Naive thymus-derived CD4-positive, alpha-beta T cell (primary cell): ENCODE measurements at regions of chr11 and their contacts with region 1.

Region 1: DNA sequence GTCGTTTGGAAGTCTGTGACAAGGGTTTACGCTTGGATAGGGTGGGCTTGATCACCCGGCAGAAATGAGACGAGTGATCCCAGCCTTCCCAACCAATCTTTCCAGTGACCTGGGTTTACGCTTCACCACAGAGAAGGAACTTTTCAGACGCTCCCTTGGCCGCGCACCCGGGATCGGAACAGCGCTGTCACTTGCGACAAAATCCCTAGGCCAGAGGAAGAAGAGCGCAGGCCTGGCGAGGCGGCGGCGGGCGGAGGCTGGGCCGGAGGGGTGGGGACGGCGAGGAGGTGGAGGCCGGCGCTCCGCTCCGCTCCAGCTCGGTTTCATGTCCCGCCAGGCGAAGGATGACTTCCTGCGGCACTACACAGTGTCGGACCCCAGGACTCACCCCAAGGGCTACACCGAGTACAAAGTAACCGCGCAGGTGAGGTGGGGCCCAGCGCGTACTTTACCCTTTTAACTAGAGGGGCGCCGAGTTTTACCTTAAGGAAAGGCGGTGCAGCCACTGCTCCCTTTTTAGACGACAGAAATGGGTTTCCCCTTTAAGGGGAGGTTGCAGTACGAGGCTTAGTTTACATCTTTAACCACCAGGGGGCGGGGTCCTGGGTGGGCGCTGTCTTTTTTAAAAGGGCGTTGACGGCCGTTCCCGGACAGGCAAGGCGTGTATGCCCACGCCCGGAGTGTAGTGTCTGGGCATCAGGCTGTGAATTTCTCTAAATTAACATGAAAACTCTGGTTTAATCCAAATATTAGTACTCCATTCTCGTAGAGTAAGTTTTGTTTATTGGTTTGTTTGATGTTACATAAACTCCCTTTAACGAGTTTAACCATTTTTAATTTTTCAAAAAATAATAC is at the start of gene SNX15:
- DNase-seq: peak; percentile 61 to 95 (median 94)
- ATAC-seq: peak; percentile 97
- H3K4me3 ChIP-seq: peak within 1 kb of the TSS; percentile 41
- H3K4me3 Mint-ChIP-seq: peak within 1 kb of the TSS; percentile 66 to 91 (median 83)
- H3K27ac ChIP-seq: peak within 1 kb of the TSS; percentile 59
- H3K27ac Mint-ChIP-seq: peak within 1 kb of the TSS; percentile 59 to 95 (median 87)
- H3K4me1 ChIP-seq: peaks cover 9 to 14% of the 10 kb centered on the region in 2 donors
- H3K4me1 Mint-ChIP-seq: peaks cover 12 to 24% (median 21%) of the 10 kb centered on the region in 7 donors
- H3K27me3 ChIP-seq: no peaks in the 10 kb centered on the region
- H3K27me3 Mint-ChIP-seq: no peaks in the 10 kb centered on the region
- total RNA-seq, gene SNX15: 13.1 to 29.0 (median 21.7) TPM

Region 2: DNA sequence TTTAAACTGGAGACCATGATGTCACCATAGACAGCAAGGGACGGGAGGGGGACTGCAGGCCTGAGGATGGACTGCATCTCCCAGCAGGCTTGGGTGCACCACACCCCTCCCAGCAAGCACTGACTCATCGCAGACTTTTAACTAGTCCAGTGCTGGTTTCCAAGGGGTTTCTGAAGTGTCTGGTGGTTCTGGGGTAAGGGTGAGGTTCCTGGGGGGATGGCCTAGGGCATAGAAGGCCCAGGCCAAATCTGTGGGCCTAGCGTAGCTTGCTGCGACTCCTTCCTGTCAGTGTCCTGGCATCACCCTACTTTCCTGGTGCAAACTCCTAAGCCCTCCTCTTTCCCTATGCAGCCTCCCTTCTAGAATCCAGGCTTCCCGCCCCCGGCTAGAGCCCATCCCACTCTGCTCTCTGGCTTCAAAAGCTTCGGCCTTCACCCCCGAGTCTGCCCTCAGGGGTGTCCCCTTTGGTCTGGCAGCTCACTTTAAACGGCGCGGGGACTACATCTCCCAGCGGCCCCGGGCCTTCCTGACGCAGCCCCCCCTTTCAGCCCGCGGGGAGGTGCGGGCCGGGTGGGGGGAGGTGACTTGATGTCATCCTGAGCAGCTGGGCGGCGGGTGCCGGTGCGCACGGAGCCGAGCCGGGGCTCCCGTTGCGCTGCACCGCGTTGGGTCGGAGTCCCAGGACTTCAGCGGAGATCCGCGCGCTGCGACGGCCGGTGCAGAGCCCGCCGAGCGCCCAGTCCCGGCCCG is 103.2 kb before region 1 on chr11 and contains the start of gene PPP2R5B:
- CTCF ChIA-PET with region 1: no interaction called
- POLR2A ChIA-PET with region 1: no interaction called
- intact Hi-C with region 1: loop called (anchors 1 kb)
- DNase-seq: peak; percentile 79 to 92 (median 89)
- ATAC-seq: peak; percentile 95
- H3K4me3 ChIP-seq: peak within 1 kb of the TSS; percentile 67
- H3K4me3 Mint-ChIP-seq: peak within 1 kb of the TSS; percentile 89 to 99 (median 96)
- H3K27ac ChIP-seq: peak within 1 kb of the TSS; percentile 81
- H3K27ac Mint-ChIP-seq: peak within 1 kb of the TSS; percentile 95 to 100 (median 98)
- H3K4me1 ChIP-seq: peaks cover 11 to 15% of the 10 kb centered on the region in 2 donors
- H3K4me1 Mint-ChIP-seq: peaks cover 9 to 24% (median 14%) of the 10 kb centered on the region in 7 donors
- H3K27me3 ChIP-seq: no peaks in the 10 kb centered on the region
- H3K27me3 Mint-ChIP-seq: no peaks in the 10 kb centered on the region
- total RNA-seq, gene PPP2R5B: 11.9 to 19.1 (median 18.8) TPM

Region 3: GRCh38 chr11:65047581-65048422 is 20.4 kb after region 1 on chr11:
- CTCF ChIA-PET with region 1: no interaction called
- POLR2A ChIA-PET with region 1: no interaction called
- intact Hi-C with region 1: no loop called
- DNase-seq: peak in 4 of 9 donors; percentile 13 to 37 (median 24)
- ATAC-seq: peak; percentile 64
- H3K4me3 ChIP-seq: peak overlapping the region; percentile 14
- H3K4me3 Mint-ChIP-seq: peak overlapping the region; percentile 81 to 95 (median 88)
- H3K27ac ChIP-seq: peak overlapping the region; percentile 70
- H3K27ac Mint-ChIP-seq: peak overlapping the region; percentile 80 to 98 (median 86)
- H3K4me1 ChIP-seq: peaks cover 0 to 17% of the 10 kb centered on the region in 2 donors
- H3K4me1 Mint-ChIP-seq: peaks cover 12 to 31% (median 23%) of the 10 kb centered on the region in 7 donors
- H3K27me3 ChIP-seq: no peaks in the 10 kb centered on the region
- H3K27me3 Mint-ChIP-seq: no peaks in the 10 kb centered on the region

Region 4: DNA sequence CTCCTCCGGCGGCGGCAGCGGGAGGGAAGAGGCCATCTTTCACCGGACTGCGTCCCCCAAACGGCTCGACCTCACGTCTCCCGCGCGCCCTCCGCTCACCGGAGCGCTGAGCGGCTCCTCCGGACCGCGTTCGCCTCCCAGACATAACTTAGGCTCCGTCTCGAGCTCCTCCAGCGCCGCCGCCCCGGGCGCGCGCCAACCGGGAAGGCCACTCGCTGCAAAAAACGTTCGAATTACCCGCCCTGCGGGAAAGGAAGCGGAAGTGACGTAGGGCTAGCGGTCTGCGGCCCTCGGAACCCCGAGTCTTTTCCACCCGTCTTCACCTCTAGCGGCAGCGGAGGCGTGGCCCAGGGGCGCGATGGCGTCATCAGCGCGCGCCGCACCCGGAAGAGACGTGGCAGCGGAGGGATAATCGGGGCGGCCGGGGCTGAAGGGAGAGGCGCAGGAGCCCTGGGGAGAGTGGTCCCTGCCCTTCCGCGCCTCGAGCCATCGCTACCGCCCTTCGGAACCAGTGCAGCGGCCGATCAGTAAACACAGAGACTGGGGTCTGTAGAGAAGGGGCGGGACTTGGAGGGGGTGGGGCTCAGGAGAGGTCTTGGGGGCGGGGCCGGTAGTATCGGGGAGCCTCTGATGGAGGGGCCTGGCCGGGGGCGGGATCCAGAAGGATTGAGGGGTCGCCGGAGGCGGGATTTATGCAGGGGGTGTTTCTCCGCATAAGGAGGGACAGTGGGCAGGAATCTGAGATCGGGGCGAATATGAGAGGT is 56.6 kb after region 1 on chr11 and contains the starts of genes CDCA5 and ZFPL1:
- CTCF ChIA-PET with region 1: interaction called, 3 read pairs
- POLR2A ChIA-PET with region 1: interaction called, 3 read pairs
- intact Hi-C with region 1: loop called (anchors 1 kb)
- DNase-seq: peak; percentile 94 to 98 (median 97)
- ATAC-seq: peak; percentile 96
- H3K4me3 ChIP-seq: peak within 1 kb of the TSS; percentile 61
- H3K4me3 Mint-ChIP-seq: peak within 1 kb of the TSS; percentile 88 to 99 (median 93)
- H3K27ac ChIP-seq: peak within 1 kb of the TSS; percentile 86
- H3K27ac Mint-ChIP-seq: peak within 1 kb of the TSS; percentile 94 to 99 (median 97)
- H3K4me1 ChIP-seq: peaks cover 13 to 14% of the 10 kb centered on the region in 2 donors
- H3K4me1 Mint-ChIP-seq: peaks cover 20 to 49% (median 27%) of the 10 kb centered on the region in 7 donors
- H3K27me3 ChIP-seq: no peaks in the 10 kb centered on the region
- H3K27me3 Mint-ChIP-seq: peaks cover 0 to 4% (median 0%) of the 10 kb centered on the region in 5 donors
- total RNA-seq, gene CDCA5: 0.56 to 68.1 (median 0.81) TPM
- total RNA-seq, gene ZFPL1: 29.9 to 53.0 (median 49.3) TPM

Region 5: DNA sequence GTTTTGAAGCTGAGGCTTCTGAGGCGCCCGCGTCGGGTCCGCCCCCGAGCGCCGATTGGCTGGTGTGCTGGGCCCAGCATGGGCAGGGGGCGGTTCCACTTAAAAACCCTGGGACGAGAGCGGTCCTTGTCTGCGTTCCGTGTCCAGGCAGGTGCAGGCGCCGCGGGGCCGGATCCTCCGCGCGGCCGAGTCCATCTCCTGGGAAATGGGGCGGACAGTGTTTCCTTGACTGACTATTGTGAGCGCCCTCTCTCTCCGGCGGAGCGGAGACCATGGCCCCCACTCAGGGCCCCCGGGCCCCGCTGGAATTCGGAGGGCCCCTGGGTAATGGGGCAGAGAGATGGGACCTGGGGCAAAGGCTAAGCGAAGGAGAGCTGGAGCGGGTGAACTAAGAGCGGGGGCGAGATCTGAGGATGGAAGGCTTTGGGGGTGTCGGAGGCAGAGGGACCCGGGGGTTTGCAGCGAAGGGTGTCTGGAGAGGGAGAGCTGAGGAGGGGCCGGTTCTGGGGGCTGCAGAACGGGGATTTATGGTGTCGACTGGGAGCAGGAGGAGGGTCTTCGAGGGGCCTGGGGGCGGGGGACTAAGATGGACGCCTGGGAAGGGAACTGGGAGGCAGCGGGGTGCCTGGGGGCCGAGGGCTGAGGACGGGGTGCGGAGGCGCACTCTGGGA is 84.4 kb after region 1 on chr11 and contains the start of gene TM7SF2:
- CTCF ChIA-PET with region 1: interaction called, 3 read pairs
- POLR2A ChIA-PET with region 1: interaction called, 5 read pairs
- intact Hi-C with region 1: loop called (anchors 1 to 2 kb)
- DNase-seq: peak; percentile 84 to 94 (median 92)
- ATAC-seq: peak; percentile 82
- H3K4me3 ChIP-seq: peak within 1 kb of the TSS; percentile 83
- H3K4me3 Mint-ChIP-seq: peak within 1 kb of the TSS; percentile 85 to 97 (median 89)
- H3K27ac ChIP-seq: peak within 1 kb of the TSS; percentile 74
- H3K27ac Mint-ChIP-seq: peak within 1 kb of the TSS; percentile 80 to 100 (median 90)
- H3K4me1 ChIP-seq: peaks cover 33 to 36% of the 10 kb centered on the region in 2 donors
- H3K4me1 Mint-ChIP-seq: peaks cover 18 to 52% (median 38%) of the 10 kb centered on the region in 7 donors
- H3K27me3 ChIP-seq: no peaks in the 10 kb centered on the region
- H3K27me3 Mint-ChIP-seq: no peaks in the 10 kb centered on the region
- total RNA-seq, gene TM7SF2: 21.6 to 37.8 (median 30.8) TPM